Heart left ventricle (tissue), 16 donors: ENCODE measurements at regions of chr10 and their contacts with region 1.

Region 1: DNA sequence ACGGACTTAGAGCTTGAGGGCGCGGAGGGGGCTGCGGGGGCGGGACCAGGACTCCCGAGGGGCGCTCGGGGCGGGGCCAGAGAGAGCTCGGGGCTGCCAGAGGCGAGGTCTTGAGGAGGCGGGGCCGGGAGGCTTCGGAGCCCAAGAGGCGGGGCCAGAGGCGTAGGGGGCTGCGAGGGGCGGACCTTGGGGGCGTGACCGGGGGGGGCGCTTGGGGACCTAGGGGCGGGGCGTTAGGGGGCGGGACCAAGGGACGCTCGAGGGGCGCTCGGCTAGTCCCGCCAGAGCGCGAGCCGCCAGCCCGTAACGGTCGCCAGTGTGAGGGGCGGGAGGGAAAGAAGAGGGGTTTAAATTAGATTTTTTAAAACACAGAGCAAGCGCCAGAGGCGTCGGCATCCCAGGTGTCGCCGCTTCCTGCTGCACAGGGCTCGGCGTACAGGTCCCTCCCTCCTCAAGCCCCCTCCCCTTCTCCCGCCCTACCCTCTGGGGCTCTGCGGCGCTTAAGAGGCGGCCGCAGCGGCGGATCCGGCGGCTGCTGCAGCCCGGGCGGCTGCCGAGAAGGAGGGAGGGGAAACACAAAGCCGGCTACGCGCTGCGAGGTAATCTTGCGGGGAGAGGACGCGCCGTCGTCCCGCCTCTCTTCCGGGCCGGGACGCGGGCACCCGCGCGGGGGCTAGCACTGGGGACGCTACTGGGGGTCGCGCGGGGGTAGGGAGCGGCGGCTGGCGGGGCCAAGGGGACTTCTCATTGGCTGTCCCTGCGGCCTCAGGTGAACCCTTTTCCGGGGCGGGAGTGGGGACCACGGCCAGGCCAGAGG is at the start of gene ADD3:
- DNase-seq: peak; percentile 96 to 99 (median 98)
- ATAC-seq: peak; percentile 91 to 94 (median 92)
- H3K4me3 ChIP-seq: peak within 1 kb of the TSS; percentile 72 to 98 (median 94)
- H3K27ac ChIP-seq: peak within 1 kb of the TSS; percentile 83 to 99 (median 97)
- H3K4me1 ChIP-seq: peaks cover 0 to 72% (median 43%) of the 10 kb centered on the region in 12 donors
- H3K27me3 ChIP-seq: no peaks in the 10 kb centered on the region
- CTCF ChIP-seq: no peak
- POLR2A ChIP-seq: peak in 1 of 2 donors; percentile 79
- total RNA-seq, gene ADD3: 47.9 to 659 (median 103) TPM

Region 2: DNA sequence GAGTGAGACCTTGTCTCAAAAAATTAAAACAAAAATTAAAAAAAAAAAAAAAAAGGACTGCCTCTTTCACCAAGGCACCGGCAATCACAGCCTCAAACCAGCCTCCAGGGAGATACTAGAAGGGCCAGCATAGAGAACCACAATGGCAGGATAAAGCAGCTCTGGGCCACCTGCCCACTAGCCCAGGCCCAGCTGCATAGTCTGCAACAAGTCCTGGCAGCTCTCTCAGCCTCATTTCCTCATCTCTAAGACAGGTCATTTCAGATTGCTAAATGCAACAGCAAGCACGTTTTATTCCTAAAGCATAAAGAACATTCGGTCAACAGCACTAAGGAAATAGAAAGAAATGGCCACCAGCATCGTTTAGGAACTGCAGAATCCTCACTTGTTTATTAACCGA is 113.4 kb before region 1 on chr10:
- intact Hi-C with region 1: loop called in 4 of 10 experiments (anchors 5 to 10 kb)
- DNase-seq: peak; percentile 78 to 90 (median 84)
- ATAC-seq: peak; percentile 68 to 78 (median 76)
- H3K4me3 ChIP-seq: peak overlapping the region in 2 of 12 donors; percentile 1 to 9
- H3K27ac ChIP-seq: peak overlapping the region; percentile 47 to 85 (median 78)
- H3K4me1 ChIP-seq: peaks cover 22 to 96% (median 82%) of the 10 kb centered on the region in 12 donors
- H3K27me3 ChIP-seq: no peaks in the 10 kb centered on the region
- CTCF ChIP-seq: no peak
- POLR2A ChIP-seq: no peak

Region 3: GRCh38 chr10:109922976-109923921 is 84.7 kb before region 1 on chr10 and contains the start of gene XPNPEP1:
- intact Hi-C with region 1: loop called in 3 of 10 experiments (anchors 1 to 10 kb)
- DNase-seq: peak; percentile 90 to 94 (median 93)
- ATAC-seq: peak; percentile 90 to 99 (median 98)
- H3K4me3 ChIP-seq: peak within 1 kb of the TSS; percentile 84 to 100 (median 97)
- H3K27ac ChIP-seq: peak within 1 kb of the TSS; percentile 81 to 98 (median 95)
- H3K4me1 ChIP-seq: peaks cover 0 to 44% (median 18%) of the 10 kb centered on the region in 12 donors
- H3K27me3 ChIP-seq: no peaks in the 10 kb centered on the region
- CTCF ChIP-seq: no peak
- POLR2A ChIP-seq: peak; percentile 25 to 96
- total RNA-seq, gene XPNPEP1: 30.5 to 77.0 (median 48.9) TPM

Region 4: GRCh38 chr10:110042181-110042580 is 34.3 kb after region 1 on chr10:
- intact Hi-C with region 1: no loop called
- DNase-seq: no peak
- ATAC-seq: peak in 1 of 4 donors; percentile 27
- H3K4me3 ChIP-seq: no peak overlapping the region
- H3K27ac ChIP-seq: peak overlapping the region in 3 of 12 donors; percentile 6 to 23 (median 11)
- H3K4me1 ChIP-seq: peaks cover 0 to 56% (median 23%) of the 10 kb centered on the region in 12 donors
- H3K27me3 ChIP-seq: no peaks in the 10 kb centered on the region
- CTCF ChIP-seq: no peak
- POLR2A ChIP-seq: no peak

Region 5: GRCh38 chr10:110076559-110077318 is 68.8 kb after region 1 on chr10:
- intact Hi-C with region 1: loop called in 5 of 10 experiments (anchors 1 to 10 kb)
- DNase-seq: peak in 4 of 5 donors; percentile 36 to 57 (median 46)
- ATAC-seq: peak; percentile 65 to 92 (median 80)
- H3K4me3 ChIP-seq: peak overlapping the region in 9 of 12 donors; percentile 22 to 45 (median 37)
- H3K27ac ChIP-seq: peak overlapping the region; percentile 23 to 90 (median 82)
- H3K4me1 ChIP-seq: peaks cover 30 to 96% (median 84%) of the 10 kb centered on the region in 12 donors
- H3K27me3 ChIP-seq: no peaks in the 10 kb centered on the region
- CTCF ChIP-seq: no peak
- POLR2A ChIP-seq: no peak

Region 6: GRCh38 chr10:110118891-110119621 is 111.1 kb after region 1 on chr10:
- intact Hi-C with region 1: loop called in 4 of 10 experiments (anchors 5 kb)
- DNase-seq: no peak
- ATAC-seq: peak; percentile 90 to 95 (median 91)
- H3K4me3 ChIP-seq: peak overlapping the region in 1 of 12 donors; percentile 21
- H3K27ac ChIP-seq: peak overlapping the region; percentile 38 to 91 (median 70)
- H3K4me1 ChIP-seq: peaks cover 3 to 16% (median 6%) of the 10 kb centered on the region in 12 donors
- H3K27me3 ChIP-seq: no peaks in the 10 kb centered on the region
- CTCF ChIP-seq: no peak
- POLR2A ChIP-seq: no peak

Region 7: GRCh38 chr10:110225756-110226542 is 218.0 kb after region 1 on chr10:
- intact Hi-C with region 1: loop called in 2 of 10 experiments (anchors 10 kb)
- DNase-seq: peak; percentile 92 to 95 (median 95)
- ATAC-seq: peak; percentile 55 to 78 (median 70)
- H3K4me3 ChIP-seq: peak overlapping the region; percentile 50 to 93 (median 87)
- H3K27ac ChIP-seq: peak overlapping the region; percentile 76 to 96 (median 88)
- H3K4me1 ChIP-seq: peaks cover 12 to 61% (median 39%) of the 10 kb centered on the region in 12 donors
- H3K27me3 ChIP-seq: no peaks in the 10 kb centered on the region
- CTCF ChIP-seq: peak; percentile 55 to 91 (median 72)
- POLR2A ChIP-seq: peak in 1 of 2 donors; percentile 39